Sciatic nerve (tissue), 2 donors: ENCODE measurements at regions of chr4 and their contacts with region 1.

Region 1: DNA sequence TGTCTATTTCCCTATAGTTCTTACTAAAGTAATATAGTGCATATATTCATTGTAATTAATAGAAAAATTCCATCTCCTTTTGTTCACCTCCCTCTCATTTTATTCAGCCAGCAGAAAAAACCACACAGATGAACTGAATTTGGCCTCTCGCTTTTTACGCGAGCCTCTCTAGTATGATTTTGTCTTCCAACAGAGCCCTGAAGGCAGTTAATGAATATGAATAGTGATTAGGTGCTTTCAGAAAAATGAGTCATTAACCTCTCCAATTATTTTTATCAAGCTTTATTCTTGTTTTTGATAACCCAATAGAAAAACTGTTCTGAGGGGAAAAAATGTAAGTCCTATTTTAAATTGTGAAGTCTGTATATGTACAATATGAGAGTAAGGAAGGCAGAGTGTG is 74.1 kb downstream of the ZAR1 start:
- DNase-seq: no peak
- ATAC-seq: no peak

Region 2: DNA sequence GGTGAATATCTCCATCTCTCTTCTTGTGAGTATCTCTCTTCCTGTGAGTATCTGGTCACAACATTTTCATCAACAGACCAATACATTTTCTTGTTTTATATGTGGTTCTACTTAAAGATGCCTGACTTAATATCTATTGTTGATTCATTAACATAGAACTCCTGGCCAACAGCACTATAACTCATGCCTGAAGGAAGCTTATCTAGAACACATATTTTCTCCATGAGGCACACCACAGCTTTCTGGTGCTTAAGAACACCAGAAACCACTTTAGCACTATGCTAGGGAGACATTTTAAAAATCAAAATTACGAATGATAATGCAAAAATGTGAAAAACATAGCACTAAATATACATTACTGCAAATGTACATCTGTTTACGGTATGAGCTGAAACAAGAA is 1342.4 kb before region 1 on chr4:
- intact Hi-C with region 1: loop called (anchors 5 kb)
- DNase-seq: no peak
- ATAC-seq: no peak

Region 3: DNA sequence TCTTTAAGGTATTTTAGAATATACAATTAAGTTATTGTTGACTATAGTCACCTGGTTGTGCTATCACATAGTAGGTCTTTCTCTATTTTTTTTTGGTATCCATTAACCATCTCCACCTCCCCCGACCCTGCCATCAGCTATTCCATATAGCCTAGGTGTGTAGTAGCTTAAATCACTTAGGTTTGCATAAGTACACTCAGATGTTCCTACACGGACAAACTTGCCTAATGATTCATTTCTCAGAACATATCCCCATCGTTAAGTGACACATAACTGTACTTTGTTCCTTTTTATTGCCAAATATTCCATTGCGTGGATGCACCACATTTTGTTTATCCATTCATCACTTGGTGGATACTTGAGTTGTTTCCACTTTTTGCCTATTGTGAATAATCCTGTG is 154.9 kb before region 1 on chr4:
- intact Hi-C with region 1: no loop called
- DNase-seq: no peak
- ATAC-seq: no peak

Region 4: DNA sequence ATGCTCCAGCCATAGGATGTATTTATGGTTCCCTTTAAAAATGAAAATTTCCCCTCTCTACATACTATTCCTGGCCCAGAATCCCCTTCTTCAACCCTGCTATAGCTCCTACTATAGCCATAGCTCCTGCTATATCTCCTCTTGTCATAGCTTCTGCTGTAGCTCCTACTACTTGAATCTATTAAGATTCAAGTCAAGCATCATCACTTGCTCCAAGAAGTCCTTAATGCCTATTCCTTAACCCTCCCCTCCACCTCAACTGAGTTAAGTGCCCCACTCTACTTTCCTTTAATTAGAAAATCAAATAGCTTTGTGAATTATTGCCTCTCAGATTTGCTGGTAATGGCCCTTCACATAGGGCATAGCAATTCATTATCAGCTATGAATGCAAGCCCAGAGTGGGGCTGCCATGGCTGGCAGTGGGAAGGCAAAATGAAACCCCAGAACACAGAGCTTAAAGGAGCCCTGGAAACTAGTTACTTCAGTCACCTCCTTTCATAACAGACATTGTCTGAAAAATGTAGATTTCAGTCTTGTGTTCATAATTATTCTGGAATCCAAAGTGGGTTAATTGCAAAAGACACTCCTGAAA is 327.0 kb after region 1 on chr4:
- intact Hi-C with region 1: loop called (anchors 5 kb)
- DNase-seq: no peak
- ATAC-seq: no peak